ENCODE measurements at regions of chr1 and their contacts with region 1.

Region 1: DNA sequence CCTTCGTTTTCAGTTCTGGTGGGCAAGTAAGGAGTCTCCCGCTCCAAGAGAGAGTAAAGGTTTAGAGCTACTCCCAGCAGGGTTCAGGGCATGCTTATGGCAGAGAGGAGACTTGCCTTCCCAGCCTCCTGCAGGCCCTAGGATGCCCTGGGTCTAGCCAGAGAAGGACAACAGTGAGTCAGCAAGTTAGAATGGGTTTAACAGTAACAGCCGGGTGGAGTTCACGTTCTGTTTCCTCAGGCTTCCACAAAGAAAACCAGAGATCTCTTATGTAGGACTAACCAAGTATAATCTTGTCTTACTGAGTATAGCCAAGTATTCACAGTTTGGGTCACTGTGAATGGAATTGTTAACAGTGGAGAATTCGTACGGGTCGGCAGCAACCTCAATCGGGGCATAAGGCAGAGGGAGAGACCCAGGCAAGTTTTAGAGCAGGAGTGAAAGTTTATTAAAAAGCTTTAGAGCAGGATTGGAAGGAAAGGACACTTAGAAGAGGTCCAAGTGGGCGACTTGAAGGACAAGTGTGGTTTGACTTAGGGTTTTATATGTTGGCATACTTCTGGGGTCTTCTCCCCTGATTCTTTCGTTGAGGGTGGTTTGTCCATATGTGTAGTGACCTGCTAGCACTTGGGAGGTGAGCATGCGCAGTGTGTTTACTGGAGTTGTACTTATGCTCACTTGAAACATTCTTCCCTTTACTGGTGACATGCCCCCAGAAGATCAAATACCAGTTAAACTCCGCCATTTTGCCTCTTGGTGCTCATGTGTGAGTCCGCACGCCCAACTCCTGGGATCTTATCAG is 4.5 kb downstream of the OVAAL start:
- DNase-seq: peak in 1 of 2 donors; percentile 38
- ATAC-seq: peak; percentile 59 to 81 (median 75)
- H3K4me3 ChIP-seq: no peak overlapping the region
- H3K27ac ChIP-seq: peak overlapping the region; percentile 75 to 90 (median 86)
- H3K4me1 ChIP-seq: peaks cover 4 to 80% (median 45%) of the 10 kb centered on the region in 9 donors
- H3K27me3 ChIP-seq: no peaks in the 10 kb centered on the region
- CTCF ChIP-seq: no peak

Region 2: DNA sequence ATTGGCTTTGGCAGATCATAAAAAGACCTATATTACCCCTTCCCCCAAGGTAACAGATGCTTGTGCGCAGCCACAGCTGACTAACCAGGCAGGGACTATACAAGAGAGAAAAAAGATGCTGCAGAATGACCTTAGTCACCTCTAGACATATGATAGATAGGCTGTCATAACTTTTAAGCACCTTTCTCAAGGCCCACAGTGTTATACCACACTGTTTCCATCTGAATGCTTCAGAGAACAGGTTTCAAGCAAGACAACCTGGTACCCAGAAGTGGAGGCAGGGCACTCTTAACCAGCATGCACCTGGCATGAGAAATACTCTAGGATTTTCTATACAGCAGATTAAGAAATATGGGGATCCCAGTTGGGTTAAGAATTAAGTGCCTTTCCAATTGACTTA is 17.2 kb before region 1 on chr1:
- intact Hi-C with region 1: loop called in 1 of 10 experiments (anchors 2 kb)
- DNase-seq: no peak
- ATAC-seq: no peak
- H3K4me3 ChIP-seq: no peak overlapping the region
- H3K27ac ChIP-seq: peak overlapping the region in 5 of 10 donors; percentile 54 to 78 (median 72)
- H3K4me1 ChIP-seq: peaks cover 7 to 48% (median 32%) of the 10 kb centered on the region in 9 donors
- H3K27me3 ChIP-seq: no peaks in the 10 kb centered on the region
- CTCF ChIP-seq: no peak

Region 3: GRCh38 chr1:180603223-180603849 is 40.1 kb after region 1 on chr1:
- intact Hi-C with region 1: loop called in 3 of 10 experiments (anchors 5 kb)
- DNase-seq: peak; percentile 31 to 44
- ATAC-seq: peak; percentile 81 to 95 (median 90)
- H3K4me3 ChIP-seq: no peak overlapping the region
- H3K27ac ChIP-seq: peak overlapping the region in 8 of 10 donors; percentile 33 to 80 (median 65)
- H3K4me1 ChIP-seq: peaks cover 0 to 32% (median 9%) of the 10 kb centered on the region in 9 donors
- H3K27me3 ChIP-seq: no peaks in the 10 kb centered on the region
- CTCF ChIP-seq: no peak

Region 4: DNA sequence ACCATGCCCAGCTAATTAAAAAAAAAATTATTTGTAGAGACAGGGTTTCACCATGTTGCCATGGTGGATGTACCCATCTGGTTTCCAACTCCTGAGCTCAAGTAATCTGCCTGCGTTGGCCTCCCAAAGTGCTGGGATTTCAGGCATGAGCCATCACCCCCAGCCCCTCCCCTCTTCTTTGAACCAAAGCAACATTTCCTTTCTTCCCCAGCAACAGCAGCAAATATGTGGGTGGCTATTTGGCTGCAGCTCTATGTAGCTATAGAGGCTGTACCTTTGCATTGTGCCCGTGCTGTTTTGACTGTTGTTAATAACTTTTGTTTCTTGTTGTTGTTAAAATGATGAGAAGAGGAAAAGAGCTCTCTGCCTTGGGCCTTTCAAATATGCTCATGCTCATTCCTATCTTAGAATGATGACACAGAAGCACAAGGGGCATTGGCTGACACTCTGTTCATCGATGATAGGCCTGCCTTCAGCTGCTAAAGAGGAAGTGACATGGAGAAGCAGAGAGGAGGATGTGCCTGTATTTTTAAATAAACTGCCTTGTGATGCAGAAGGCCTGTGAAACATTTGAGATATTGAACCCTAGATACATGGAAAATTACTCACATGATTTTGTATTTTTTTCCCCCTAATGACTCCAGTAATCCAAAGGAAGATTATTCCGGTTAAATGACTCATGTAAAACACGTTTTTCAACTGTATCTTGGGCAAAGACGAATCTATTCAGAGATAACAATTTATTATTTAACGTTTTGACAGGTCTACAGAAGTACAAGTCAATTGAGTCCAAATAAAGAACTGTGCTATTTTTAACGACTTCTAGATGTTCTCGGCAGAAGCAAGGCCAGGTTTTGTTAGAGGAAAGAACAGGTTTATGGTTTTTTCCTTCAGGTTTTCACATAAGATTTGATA is 48.0 kb after region 1 on chr1:
- intact Hi-C with region 1: loop called in 2 of 10 experiments (anchors 5 kb)
- DNase-seq: peak in 1 of 2 donors; percentile 66
- ATAC-seq: peak; percentile 70 to 95 (median 90)
- H3K4me3 ChIP-seq: no peak overlapping the region
- H3K27ac ChIP-seq: peak overlapping the region; percentile 38 to 86 (median 75)
- H3K4me1 ChIP-seq: peaks cover 0 to 38% (median 19%) of the 10 kb centered on the region in 9 donors
- H3K27me3 ChIP-seq: no peaks in the 10 kb centered on the region
- CTCF ChIP-seq: no peak

Region 5: DNA sequence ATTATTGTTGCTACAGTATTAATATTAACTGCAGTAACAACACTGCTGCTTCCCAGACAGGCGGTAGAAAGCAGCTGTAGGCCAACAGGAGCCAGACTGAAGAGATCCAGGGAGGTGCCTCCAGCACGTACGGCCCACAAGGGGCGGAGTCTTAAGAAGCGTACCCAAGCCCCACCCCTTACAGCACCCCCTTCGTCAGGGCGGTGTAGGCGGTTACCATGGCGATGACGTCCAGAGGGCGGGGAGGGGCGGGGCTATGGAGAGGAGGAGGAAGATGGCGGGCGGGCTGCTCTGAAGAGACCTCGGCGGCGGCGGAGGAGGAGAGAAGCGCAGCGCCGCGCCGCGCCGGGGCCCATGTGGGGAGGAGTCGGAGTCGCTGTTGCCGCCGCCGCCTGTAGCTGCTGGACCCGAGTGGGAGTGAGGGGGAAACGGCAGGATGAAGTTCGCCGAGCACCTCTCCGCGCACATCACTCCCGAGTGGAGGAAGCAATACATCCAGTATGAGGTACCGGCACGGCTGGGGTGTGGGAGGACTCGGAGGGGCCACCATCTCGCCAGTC is 68.6 kb after region 1 on chr1 and contains the start of gene XPR1:
- intact Hi-C with region 1: loop called in 2 of 10 experiments (anchors 5 kb)
- DNase-seq: peak; percentile 99
- ATAC-seq: peak; percentile 98 to 99 (median 99)
- H3K4me3 ChIP-seq: peak within 1 kb of the TSS; percentile 75 to 94 (median 86)
- H3K27ac ChIP-seq: peak within 1 kb of the TSS; percentile 90 to 98 (median 94)
- H3K4me1 ChIP-seq: peaks cover 0 to 51% (median 27%) of the 10 kb centered on the region in 9 donors
- H3K27me3 ChIP-seq: no peaks in the 10 kb centered on the region
- CTCF ChIP-seq: peak; percentile 13 to 55 (median 32)
- total RNA-seq, gene XPR1: 28.2 to 142 (median 78.7) TPM

Measured in heart right ventricle (tissue), 16 donors.